ENCODE measurements at regions of chr17 and their contacts with region 1.

Region 1: GRCh38 chr17:1447052-1447451 is 9.0 kb downstream of the CRK start:
- DNase-seq: no peak
- ATAC-seq: peak in 3 of 4 donors; percentile 32 to 73 (median 48)
- H3K4me3 ChIP-seq: peak overlapping the region in 8 of 12 donors; percentile 2 to 27 (median 8)
- H3K27ac ChIP-seq: peak overlapping the region; percentile 27 to 89 (median 64)
- H3K4me1 ChIP-seq: peaks cover 0 to 62% (median 42%) of the 10 kb centered on the region in 12 donors
- H3K27me3 ChIP-seq: no peaks in the 10 kb centered on the region
- CTCF ChIP-seq: no peak
- POLR2A ChIP-seq: no peak

Region 2: DNA sequence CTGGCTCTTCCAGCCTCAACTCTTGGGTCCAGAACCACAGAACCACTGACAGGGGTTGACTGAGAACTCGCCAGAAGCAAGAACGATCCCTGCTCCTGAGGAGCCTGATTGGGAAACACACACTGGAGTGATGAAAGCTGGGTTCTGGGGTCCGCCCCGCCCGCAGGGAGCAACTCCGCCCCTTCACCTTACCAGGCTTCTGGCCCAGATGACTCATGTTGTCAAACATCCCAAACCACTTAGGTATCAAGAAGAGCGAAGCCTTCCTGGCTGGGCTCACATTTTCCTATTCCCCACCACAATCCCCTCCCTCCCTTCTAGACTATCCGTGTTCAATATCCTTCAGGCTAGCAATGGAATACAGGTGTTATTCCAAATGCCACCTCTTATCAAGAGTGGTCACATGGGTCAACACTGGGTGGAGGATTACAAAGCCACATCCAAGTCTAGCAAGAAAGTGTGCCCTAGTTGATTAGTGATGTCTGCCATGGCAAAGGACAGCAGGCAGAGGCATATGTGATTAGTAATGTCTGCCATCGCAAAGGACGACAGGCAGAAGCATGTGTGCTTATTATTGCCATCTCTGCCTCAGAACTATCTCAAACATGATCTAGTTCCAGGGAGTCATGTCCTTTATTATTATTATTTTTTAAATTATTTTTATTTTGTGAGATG is 379.6 kb before region 1 on chr17:
- intact Hi-C with region 1: no loop called
- DNase-seq: peak; percentile 48 to 79 (median 60)
- ATAC-seq: peak; percentile 83 to 94 (median 92)
- H3K4me3 ChIP-seq: no peak overlapping the region
- H3K27ac ChIP-seq: peak overlapping the region in 8 of 12 donors; percentile 3 to 73 (median 43)
- H3K4me1 ChIP-seq: peaks cover 0 to 11% (median 0%) of the 10 kb centered on the region in 12 donors
- H3K27me3 ChIP-seq: no peaks in the 10 kb centered on the region
- CTCF ChIP-seq: no peak
- POLR2A ChIP-seq: no peak

Region 3: DNA sequence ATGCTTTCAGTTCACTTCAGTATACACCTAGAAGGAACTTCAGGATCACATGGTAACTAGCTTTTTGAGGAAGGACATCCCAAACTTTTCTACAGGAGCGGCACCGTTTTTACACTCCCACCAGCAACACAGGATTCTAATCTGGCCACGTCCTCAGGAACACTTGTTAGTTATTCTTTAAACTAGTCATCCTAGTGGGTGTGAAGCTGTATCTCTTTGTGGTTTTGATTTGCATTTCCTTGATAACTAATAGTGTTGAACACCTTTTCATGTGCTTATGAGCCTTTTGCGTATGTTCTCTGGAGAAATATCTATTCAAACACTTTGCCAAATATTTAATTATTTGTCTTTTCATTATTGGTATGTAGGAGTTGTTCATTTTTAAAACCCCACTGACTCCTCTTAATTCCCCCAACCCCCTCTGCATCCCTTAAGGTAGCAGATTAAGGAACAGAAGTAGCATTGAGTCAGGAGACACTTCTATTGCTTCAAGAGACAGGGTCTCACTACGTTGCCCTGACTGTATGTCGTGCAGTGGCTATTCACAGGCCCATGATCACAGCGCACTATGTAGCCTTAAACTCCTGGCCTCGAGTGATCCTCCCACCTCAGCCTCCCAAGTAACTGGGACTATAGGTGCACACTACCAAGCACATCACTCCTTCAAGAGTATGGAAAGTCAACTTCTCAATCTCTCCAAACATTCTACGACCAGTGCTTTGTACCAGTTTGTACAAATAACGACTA is 72.4 kb before region 1 on chr17:
- intact Hi-C with region 1: loop called in 4 of 10 experiments (anchors 5 to 10 kb)
- DNase-seq: no peak
- ATAC-seq: no peak
- H3K4me3 ChIP-seq: no peak overlapping the region
- H3K27ac ChIP-seq: peak overlapping the region in 1 of 12 donors; percentile 59
- H3K4me1 ChIP-seq: peaks cover 3 to 94% (median 80%) of the 10 kb centered on the region in 12 donors
- H3K27me3 ChIP-seq: no peaks in the 10 kb centered on the region
- CTCF ChIP-seq: no peak
- POLR2A ChIP-seq: no peak

Region 4: GRCh38 chr17:1399679-1400512 is 47.2 kb before region 1 on chr17 and contains the start of gene YWHAE:
- intact Hi-C with region 1: loop called in 3 of 10 experiments (anchors 5 to 10 kb)
- DNase-seq: peak; percentile 98 to 99 (median 98)
- ATAC-seq: peak; percentile 97 to 99 (median 98)
- H3K4me3 ChIP-seq: peak within 1 kb of the TSS; percentile 76 to 98 (median 88)
- H3K27ac ChIP-seq: peak within 1 kb of the TSS; percentile 93 to 99 (median 98)
- H3K4me1 ChIP-seq: peaks cover 6 to 49% (median 27%) of the 10 kb centered on the region in 12 donors
- H3K27me3 ChIP-seq: no peaks in the 10 kb centered on the region
- CTCF ChIP-seq: no peak
- POLR2A ChIP-seq: peak in 1 of 2 donors; percentile 87
- total RNA-seq, gene YWHAE: 562 to 1,150 (median 618) TPM